Ascending aorta (tissue), 2 donors: ENCODE measurements at regions of chr1 and their contacts with region 1.

Region 1: DNA sequence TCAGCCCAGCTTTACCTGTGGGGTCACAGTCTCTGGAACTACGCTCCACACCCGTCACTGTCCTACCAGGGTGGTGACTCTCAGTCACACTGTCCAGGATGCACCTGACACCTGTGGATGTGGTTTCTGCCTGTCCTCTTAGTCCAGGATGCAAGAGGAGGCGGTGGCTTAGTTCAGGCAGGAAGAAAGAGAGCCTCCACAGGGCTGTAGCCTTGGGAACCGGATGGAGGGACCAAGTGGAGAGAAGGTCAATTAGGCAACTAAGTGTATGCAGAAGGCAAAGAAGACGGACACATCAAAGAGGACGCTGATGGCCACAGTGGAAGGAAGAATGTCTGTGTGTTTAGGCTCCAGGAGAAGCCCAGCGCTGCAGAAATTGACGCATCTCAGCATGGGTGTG is 153.9 kb upstream of the IRF2BP2 start:
- DNase-seq: no peak
- H3K4me3 ChIP-seq: no peak overlapping the region
- H3K27ac ChIP-seq: no peak overlapping the region
- H3K4me1 ChIP-seq: peaks cover 0 to 3% of the 10 kb centered on the region in 2 donors
- H3K27me3 ChIP-seq: no peaks in the 10 kb centered on the region
- CTCF ChIP-seq: no peak

Region 2: DNA sequence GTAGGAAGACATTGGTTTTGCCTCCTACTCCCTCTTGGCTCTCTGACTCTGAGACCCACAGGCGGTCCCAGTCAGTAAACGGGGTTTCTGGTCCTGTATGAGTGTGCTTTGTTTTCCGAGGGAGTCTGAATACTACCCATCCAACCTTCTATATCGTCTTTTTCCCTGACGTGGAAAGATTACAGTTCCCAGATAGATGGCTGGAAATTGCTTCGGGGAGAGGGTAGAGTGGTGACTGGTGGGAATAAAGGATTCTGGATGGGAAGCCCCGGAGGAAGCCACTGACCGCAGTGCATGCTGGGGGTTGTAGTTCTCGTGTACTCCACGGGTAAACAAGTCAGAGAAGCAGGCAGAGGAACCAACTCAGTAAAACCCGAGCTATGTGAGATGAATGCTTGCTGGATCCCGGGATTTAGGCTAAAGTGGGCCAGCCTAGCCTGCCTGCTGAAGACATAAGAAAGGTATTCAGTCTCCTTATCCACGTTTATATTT is 87.8 kb before region 1 on chr1:
- intact Hi-C with region 1: no loop called
- DNase-seq: peak in 1 of 2 donors; percentile 91
- H3K4me3 ChIP-seq: peak overlapping the region; percentile 32 to 62
- H3K27ac ChIP-seq: peak overlapping the region in 1 of 2 donors; percentile 31
- H3K4me1 ChIP-seq: no peaks in the 10 kb centered on the region
- H3K27me3 ChIP-seq: no peaks in the 10 kb centered on the region
- CTCF ChIP-seq: no peak

Region 3: GRCh38 chr1:234731569-234732085 is 32.3 kb before region 1 on chr1:
- intact Hi-C with region 1: loop called (anchors 2 kb)
- DNase-seq: no peak
- H3K4me3 ChIP-seq: no peak overlapping the region
- H3K27ac ChIP-seq: no peak overlapping the region
- H3K4me1 ChIP-seq: peaks cover 3 to 12% of the 10 kb centered on the region in 2 donors
- H3K27me3 ChIP-seq: no peaks in the 10 kb centered on the region
- CTCF ChIP-seq: no peak

Region 4: DNA sequence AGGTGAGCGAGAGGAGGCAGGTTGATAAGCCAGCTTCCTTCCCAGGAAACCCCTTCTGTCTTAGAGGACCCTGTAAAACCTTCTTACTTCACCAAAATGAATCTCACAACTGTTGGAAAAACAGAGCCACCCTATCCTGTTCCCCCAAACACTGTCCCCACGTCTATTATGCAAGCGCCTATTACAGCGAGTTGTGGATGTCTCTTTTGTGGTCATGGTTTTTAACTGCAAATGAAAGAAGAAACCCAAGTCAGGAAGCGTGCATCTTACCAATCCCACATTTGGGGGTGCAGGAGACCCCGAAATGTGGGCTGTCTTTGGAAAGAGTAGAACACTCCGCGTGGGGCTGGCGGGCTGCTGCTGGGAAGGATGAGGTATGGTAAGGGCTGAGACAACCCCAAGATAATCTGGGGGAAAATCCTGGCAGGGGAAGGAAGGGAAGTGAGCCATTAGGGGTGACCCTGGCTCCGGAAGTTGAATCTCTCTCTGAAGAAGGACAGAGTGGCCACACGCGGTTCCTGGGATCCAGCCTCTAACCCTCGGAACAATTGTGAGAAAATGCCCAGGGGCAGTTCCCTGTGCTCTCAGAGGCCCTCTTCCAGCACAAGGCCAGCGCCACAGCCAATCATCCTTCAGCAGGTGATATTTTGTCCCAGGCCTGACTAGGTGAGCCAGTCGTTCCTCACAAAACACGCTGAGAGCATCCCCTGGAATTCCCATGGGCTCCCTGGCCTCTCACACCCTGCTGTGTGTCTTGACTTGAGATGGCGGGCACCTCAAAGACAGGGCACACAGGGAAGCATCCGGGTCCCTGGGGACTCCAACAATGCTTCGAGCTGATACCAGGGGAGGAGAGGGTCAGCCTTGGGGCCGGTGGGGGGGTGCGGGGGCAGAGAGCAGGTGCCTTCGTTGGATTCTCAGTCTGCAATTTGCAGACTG is 14.6 kb after region 1 on chr1:
- intact Hi-C with region 1: no loop called
- DNase-seq: peak in 1 of 2 donors; percentile 74
- H3K4me3 ChIP-seq: no peak overlapping the region
- H3K27ac ChIP-seq: no peak overlapping the region
- H3K4me1 ChIP-seq: no peaks in the 10 kb centered on the region
- H3K27me3 ChIP-seq: no peaks in the 10 kb centered on the region
- CTCF ChIP-seq: no peak